Activated T-helper 2 cell treated with anti-CD3 and anti-CD28 coated beads, Interferon-gamma antibody, Interleukin-2, Interleukin-4, amounts not matched to agents 10 μg/mL and 5 μg/mL and 100 μg/mL, durations not matched to agents 14 hours and 24 hours and 36 hours (primary cell): ENCODE measurements at regions of chr6 and their contacts with region 1.

Region 1: DNA sequence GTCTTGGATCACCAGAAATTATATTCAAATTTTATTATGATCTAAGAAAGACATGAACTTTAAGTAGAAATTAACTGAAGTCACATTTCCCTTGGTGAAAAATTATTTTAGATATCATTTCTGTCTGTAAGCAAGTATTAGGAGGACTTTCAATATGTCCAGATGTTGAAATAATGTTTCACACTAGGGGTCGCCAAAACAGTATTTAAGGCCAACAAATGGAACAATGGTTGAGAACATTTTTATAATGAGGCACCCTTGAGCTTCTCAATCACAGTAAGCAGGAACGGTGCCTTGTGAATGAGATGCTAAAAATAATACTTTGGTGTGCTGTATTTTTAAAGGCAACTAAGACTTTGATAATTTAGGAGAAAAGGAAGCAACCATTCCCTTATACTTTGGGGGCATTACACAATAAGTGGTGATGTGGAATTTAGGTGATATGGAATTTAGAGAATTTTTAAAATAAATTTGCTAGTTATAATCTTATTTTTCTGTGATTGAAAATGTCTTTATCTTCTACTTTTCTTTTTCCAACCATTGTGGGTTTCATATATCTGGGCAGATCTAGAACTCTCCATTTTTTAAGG is 9.6 kb upstream of the SF3B5 start:
- DNase-seq: no peak
- H3K4me3 Mint-ChIP-seq: no peak overlapping the region
- H3K27ac Mint-ChIP-seq: no peak overlapping the region
- H3K4me1 Mint-ChIP-seq: peaks cover 9% of the 10 kb centered on the region
- H3K27me3 Mint-ChIP-seq: peaks cover 6% of the 10 kb centered on the region

Region 2: GRCh38 chr6:144482142-144482541 is 377.1 kb after region 1 on chr6:
- intact Hi-C with region 1: loop called (anchors 1 kb)
- DNase-seq: peak; percentile 49
- H3K4me3 Mint-ChIP-seq: no peak overlapping the region
- H3K27ac Mint-ChIP-seq: no peak overlapping the region
- H3K4me1 Mint-ChIP-seq: peaks cover 10% of the 10 kb centered on the region
- H3K27me3 Mint-ChIP-seq: no peaks in the 10 kb centered on the region